PC-9 (cell line): ENCODE measurements at regions of chr12 and their contacts with region 1.

Region 1: DNA sequence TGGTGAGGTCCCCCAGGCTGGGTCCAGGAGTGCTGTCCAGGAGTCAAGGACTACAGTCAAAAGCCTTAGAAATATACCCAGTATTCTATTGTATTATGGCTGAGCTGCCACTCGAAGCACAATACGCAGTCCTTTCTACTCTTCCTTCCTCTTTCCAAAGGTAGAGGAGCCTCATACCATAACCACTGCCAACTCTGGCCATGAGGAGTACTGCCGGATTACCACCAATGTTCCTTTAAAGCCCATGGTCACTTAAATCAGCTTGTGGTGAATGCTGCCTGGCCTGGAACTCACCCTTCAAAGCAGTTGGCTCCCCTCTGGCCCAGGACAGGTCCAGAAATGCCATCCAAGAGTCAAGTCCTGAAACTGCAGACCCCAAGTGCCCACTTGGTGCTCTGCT is 425.4 kb downstream of the SLC16A7 start:
- DNase-seq: no peak
- H3K4me3 ChIP-seq: no peak overlapping the region
- H3K27ac ChIP-seq: no peak overlapping the region
- H3K4me1 ChIP-seq: no peaks in the 10 kb centered on the region
- H3K27me3 ChIP-seq: no peaks in the 10 kb centered on the region
- CTCF ChIP-seq: no peak

Region 2: GRCh38 chr12:59874781-59875180 is 146.5 kb before region 1 on chr12:
- CTCF ChIA-PET with region 1: no interaction called
- POLR2A ChIA-PET with region 1: no interaction called
- intact Hi-C with region 1: no loop called
- DNase-seq: no peak
- H3K4me3 ChIP-seq: no peak overlapping the region
- H3K27ac ChIP-seq: no peak overlapping the region
- H3K4me1 ChIP-seq: no peaks in the 10 kb centered on the region
- H3K27me3 ChIP-seq: no peaks in the 10 kb centered on the region
- CTCF ChIP-seq: no peak

Region 3: DNA sequence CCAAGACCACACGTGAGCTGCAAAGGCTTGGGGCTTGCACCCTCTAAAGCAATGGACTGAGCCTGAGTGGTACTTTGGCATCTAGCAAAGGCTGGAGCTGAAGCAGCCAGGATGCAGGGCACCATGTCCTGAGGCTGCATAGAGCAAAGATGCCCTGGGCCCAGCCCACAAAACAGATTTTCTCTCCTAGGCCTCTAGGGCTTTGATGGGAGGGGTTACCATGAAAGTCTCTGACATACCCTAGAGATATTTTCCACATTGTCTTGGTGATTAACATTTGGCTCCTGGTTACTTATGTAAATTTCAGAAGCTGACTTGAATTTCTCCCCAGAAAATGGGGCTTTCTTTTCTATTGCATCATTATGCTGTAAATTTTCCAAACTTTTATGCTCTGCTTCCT is 12.9 kb after region 1 on chr12:
- CTCF ChIA-PET with region 1: no interaction called
- POLR2A ChIA-PET with region 1: no interaction called
- intact Hi-C with region 1: loop called (anchors 1 kb)
- DNase-seq: no peak
- H3K4me3 ChIP-seq: no peak overlapping the region
- H3K27ac ChIP-seq: no peak overlapping the region
- H3K4me1 ChIP-seq: no peaks in the 10 kb centered on the region
- H3K27me3 ChIP-seq: no peaks in the 10 kb centered on the region
- CTCF ChIP-seq: no peak

Region 4: DNA sequence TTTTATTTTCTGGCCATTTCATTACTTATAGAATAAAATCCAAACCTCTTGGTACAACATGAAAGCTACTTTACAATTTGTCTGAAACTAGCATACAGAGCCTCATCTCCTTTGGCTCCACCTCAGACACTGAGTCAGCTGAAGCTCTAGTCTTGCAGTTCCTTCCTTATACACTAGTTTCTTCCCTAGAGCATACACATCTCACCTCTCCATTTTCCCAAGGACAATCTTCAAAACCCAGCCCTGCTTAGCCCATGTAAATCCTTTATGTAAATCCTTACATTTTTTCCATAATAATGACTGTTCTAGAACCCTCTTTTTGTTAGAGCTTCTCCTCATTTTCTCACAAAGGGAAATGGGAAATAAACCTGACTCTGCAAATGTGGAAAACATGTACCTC is 37.9 kb after region 1 on chr12:
- CTCF ChIA-PET with region 1: no interaction called
- POLR2A ChIA-PET with region 1: no interaction called
- intact Hi-C with region 1: no loop called
- DNase-seq: no peak
- H3K4me3 ChIP-seq: no peak overlapping the region
- H3K27ac ChIP-seq: no peak overlapping the region
- H3K4me1 ChIP-seq: no peaks in the 10 kb centered on the region
- H3K27me3 ChIP-seq: no peaks in the 10 kb centered on the region
- CTCF ChIP-seq: no peak

Region 5: GRCh38 chr12:60830381-60830780 is 809.1 kb after region 1 on chr12:
- CTCF ChIA-PET with region 1: no interaction called
- POLR2A ChIA-PET with region 1: no interaction called
- intact Hi-C with region 1: no loop called
- DNase-seq: no peak
- H3K4me3 ChIP-seq: no peak overlapping the region
- H3K27ac ChIP-seq: no peak overlapping the region
- H3K4me1 ChIP-seq: no peaks in the 10 kb centered on the region
- H3K27me3 ChIP-seq: no peaks in the 10 kb centered on the region
- CTCF ChIP-seq: no peak